ENCODE measurements at regions of chr17 and their contacts with region 1.

Region 1: DNA sequence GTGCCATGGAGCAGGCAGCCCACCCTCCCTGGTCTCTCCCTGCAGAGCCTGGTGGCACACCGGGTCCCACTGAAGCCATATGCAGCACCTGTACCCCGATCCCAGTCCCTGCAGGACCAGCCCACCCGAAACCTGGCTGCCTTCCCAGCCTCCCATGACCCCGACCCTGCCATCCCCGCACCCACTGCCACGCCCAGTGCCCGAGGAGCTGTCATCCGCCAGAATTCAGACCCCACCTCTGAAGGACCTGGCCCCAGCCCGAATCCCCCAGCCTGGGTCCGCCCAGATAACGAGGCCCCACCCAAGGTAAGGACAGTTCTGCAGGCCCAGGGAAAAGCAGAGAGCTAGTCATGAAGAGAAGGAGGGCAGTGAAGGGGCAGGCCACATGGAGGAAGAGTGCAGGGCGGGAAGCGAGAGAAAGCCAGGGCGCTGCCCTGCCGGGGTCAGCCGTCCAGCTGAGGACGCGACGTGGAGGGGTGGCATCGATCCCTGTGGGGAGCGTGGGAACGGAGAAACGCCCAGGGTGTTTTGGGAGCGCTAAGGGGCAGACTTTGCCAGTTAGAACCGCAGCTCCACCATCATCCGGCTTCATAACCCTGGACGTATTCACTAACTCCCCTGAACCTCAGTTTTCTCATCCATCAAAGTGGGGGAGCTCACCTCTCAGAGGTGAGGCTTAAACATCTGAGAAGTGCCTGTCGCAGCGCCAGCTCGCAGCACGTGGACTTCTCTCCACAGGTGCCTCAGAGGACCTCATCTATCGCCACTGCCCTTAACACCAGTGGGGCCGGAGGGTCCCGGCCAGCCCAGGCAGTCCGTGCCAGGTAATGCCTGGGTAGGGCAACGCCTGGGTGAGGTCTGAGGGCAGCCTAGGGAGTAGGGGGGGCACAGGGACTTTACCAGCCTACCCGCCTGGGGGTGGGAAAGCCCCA is 7.7 kb upstream of the C17orf107 start:
- DNase-seq: no peak
- H3K4me3 ChIP-seq: no peak overlapping the region
- H3K27ac ChIP-seq: no peak overlapping the region
- H3K4me1 ChIP-seq: no peaks in the 10 kb centered on the region
- H3K27me3 ChIP-seq: no peaks in the 10 kb centered on the region
- CTCF ChIP-seq: no peak
- EP300 ChIP-seq: no peak
- RAD21 ChIP-seq: no peak

Region 2: GRCh38 chr17:4780325-4780955 is 111.2 kb before region 1 on chr17:
- CTCF ChIA-PET with region 1: interaction called, 235 read pairs
- POLR2A ChIA-PET with region 1: no interaction called
- DNase-seq: no peak
- H3K4me3 ChIP-seq: no peak overlapping the region
- H3K27ac ChIP-seq: no peak overlapping the region
- H3K4me1 ChIP-seq: no peaks in the 10 kb centered on the region; a peak in 1 of 4 replicates
- H3K27me3 ChIP-seq: peaks cover 53% of the 10 kb centered on the region
- CTCF ChIP-seq: no peak
- EP300 ChIP-seq: no peak
- RAD21 ChIP-seq: no peak

Region 3: DNA sequence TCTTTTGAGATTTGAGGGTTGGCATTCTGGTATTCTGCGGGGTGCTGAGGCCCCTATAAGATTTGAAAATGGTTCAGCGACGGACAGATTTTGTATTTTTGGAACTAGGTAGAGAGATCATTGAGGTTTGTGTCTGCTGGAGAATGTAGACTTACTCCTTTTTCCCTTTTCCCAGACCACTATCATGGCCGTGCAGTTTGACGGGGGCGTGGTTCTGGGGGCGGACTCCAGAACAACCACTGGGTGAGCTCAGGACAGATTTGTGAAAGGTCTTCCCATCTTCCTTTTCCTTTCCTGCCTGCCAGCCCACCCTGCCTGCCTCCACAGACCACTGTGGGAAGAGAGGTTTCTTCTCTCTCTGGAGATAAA is 95.1 kb before region 1 on chr17:
- CTCF ChIA-PET with region 1: interaction called, 11 read pairs
- POLR2A ChIA-PET with region 1: no interaction called
- DNase-seq: peak; percentile 75
- H3K4me3 ChIP-seq: peak overlapping the region; percentile 81 to 95
- H3K27ac ChIP-seq: peak overlapping the region; percentile 78 to 80
- H3K4me1 ChIP-seq: peaks cover 0 to 8% of the 10 kb centered on the region in 2 experiments; a peak in 1 of 4 replicates
- H3K27me3 ChIP-seq: no peaks in the 10 kb centered on the region
- CTCF ChIP-seq: no peak
- EP300 ChIP-seq: no peak
- RAD21 ChIP-seq: no peak

Region 4: GRCh38 chr17:4823373-4824089 is 68.1 kb before region 1 on chr17:
- CTCF ChIA-PET with region 1: no interaction called
- POLR2A ChIA-PET with region 1: no interaction called
- DNase-seq: no peak
- H3K4me3 ChIP-seq: no peak overlapping the region
- H3K27ac ChIP-seq: no peak overlapping the region
- H3K4me1 ChIP-seq: no peaks in the 10 kb centered on the region
- H3K27me3 ChIP-seq: no peaks in the 10 kb centered on the region
- CTCF ChIP-seq: no peak
- EP300 ChIP-seq: no peak
- RAD21 ChIP-seq: no peak

Measured in SK-N-SH (cell line).